ENCODE measurements at regions of chr1 and their contacts with region 1.

Region 1: DNA sequence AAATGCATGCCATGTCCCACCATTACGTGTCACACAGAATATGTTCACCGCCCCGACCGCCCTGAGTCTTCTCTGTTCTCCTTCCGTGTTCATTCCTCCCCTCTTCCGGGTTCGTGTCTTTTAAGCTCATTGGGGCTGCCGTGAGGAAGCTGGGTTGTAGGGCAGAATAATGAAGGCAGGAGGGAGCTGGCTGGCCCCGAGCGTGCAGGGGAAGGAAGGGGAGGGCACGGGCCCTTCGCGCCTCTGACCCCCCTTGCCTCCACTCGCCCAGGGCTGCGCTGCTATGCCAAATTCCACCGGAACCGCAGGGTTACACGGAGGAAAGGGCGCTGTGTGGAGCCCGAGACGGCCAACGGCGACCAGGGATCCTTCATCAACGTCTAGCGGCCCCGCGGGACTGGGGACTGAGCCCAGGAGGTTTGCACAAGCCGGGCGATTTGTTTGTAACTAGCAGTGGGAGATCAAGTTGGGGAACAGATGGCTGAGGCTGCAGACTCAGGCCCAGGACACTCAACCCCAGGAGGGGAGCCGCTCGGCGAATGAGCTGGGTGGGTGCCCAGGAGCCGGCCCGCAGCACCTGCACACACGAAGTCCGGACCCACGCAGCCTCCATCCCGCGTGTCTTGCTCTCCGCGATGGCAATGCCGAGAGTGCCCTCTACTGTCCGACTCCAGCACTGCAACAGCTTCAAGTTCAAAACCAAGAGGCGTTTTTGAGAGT is 16.5 kb upstream of the AGTRAP start:
- DNase-seq: peak; percentile 89 to 95
- ATAC-seq: peak; percentile 84 to 92 (median 87)
- H3K4me3 ChIP-seq: peak overlapping the region; percentile 40
- H3K4me3 Mint-ChIP-seq: peak overlapping the region; percentile 83
- H3K27ac ChIP-seq: peak overlapping the region; percentile 75
- H3K27ac Mint-ChIP-seq: peak overlapping the region; percentile 91 to 93
- H3K4me1 ChIP-seq: peaks cover 20% of the 10 kb centered on the region
- H3K4me1 Mint-ChIP-seq: peaks cover 17 to 19% of the 10 kb centered on the region in 2 donors
- H3K27me3 ChIP-seq: no peaks in the 10 kb centered on the region
- H3K27me3 Mint-ChIP-seq: no peaks in the 10 kb centered on the region
- CTCF ChIP-seq: peak; percentile 98

Region 2: DNA sequence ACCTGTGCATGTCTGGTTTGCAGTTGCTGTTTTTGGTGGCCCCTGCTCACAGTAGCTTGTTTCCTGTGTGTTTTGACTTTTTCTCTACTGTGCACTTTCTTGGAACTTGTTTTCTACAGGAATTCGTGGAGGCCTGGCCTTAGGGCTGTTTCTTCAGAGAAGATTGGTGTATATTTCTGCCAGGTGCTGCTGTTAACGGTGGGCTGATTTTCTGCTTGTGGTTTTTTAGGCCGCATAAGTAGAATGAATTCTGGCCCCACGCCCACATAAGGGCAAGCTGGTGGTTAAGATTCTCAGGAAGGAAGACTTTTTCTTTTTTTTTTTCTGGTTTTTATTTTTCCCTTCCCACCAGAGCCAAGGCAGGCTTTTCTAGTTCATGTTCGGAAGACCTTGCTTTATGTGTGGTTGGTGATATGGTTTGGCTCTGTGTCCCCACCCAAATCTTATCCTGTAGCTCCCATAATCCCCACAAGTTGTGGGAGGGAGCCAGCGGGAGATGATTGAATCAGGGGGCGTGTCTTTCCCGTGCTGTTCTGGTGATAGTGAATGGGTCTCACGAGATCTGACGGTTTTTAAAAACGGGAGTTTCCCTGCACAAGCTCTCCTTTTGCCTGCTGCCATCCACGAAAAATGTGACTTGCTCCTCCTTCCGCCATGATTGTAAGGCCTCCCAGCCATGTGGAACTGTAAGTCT is 312.0 kb before region 1 on chr1:
- intact Hi-C with region 1: no loop called
- DNase-seq: peak in 1 of 2 donors; percentile 30
- ATAC-seq: no peak
- H3K4me3 ChIP-seq: no peak overlapping the region
- H3K4me3 Mint-ChIP-seq: peak overlapping the region; percentile 80
- H3K27ac ChIP-seq: no peak overlapping the region
- H3K27ac Mint-ChIP-seq: peak overlapping the region; percentile 7 to 8
- H3K4me1 ChIP-seq: peaks cover 20% of the 10 kb centered on the region
- H3K4me1 Mint-ChIP-seq: peaks cover 21 to 24% of the 10 kb centered on the region in 2 donors
- H3K27me3 ChIP-seq: no peaks in the 10 kb centered on the region
- H3K27me3 Mint-ChIP-seq: no peaks in the 10 kb centered on the region
- CTCF ChIP-seq: no peak

Region 3: GRCh38 chr1:11661103-11661502 is 58.4 kb before region 1 on chr1:
- intact Hi-C with region 1: loop called (anchors 1 kb)
- DNase-seq: no peak
- ATAC-seq: no peak
- H3K4me3 ChIP-seq: no peak overlapping the region
- H3K4me3 Mint-ChIP-seq: no peak overlapping the region
- H3K27ac ChIP-seq: no peak overlapping the region
- H3K27ac Mint-ChIP-seq: no peak overlapping the region
- H3K4me1 ChIP-seq: peaks cover 22% of the 10 kb centered on the region
- H3K4me1 Mint-ChIP-seq: peaks cover 0 to 5% of the 10 kb centered on the region in 2 donors
- H3K27me3 ChIP-seq: no peaks in the 10 kb centered on the region
- H3K27me3 Mint-ChIP-seq: no peaks in the 10 kb centered on the region
- CTCF ChIP-seq: no peak

Region 4: DNA sequence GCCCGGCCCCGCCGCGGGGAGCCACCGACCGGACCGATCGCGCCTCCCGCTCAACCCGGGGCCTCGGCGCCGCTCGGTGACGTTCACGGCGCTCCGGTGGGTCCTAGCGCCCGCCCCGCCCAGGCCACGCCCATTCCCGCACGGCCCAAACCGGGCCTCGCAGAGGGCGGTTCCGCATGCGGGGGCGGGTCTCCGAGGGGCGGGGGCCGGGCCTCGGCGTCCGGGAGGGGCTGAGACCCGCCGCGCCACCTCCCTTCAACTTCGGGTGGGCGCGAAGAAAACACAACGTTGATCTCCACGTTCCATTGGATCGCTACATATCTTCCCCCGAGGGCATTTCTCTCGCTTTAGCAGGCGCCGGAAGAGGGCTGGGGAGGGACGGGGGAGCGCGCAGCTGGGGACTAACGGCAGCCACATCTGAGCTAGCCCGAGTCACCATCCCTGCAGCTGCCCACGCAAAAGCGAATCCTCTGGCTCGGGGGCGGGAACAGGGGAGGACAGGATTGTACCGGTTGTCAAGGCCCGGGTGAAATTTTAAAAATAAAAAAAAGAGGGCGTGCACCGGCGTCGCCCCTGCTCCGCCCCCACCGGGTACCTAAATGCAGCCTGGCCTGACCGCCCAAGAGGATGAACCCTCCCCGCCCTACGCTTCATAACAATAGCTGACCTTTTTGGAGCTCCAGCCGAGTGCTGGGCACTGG is 38.3 kb before region 1 on chr1 and contains the start of gene MAD2L2:
- intact Hi-C with region 1: loop called (anchors 5 kb)
- DNase-seq: peak; percentile 90 to 93
- ATAC-seq: peak; percentile 92 to 96 (median 93)
- H3K4me3 ChIP-seq: peak within 1 kb of the TSS; percentile 98
- H3K4me3 Mint-ChIP-seq: peak within 1 kb of the TSS; percentile 92
- H3K27ac ChIP-seq: peak within 1 kb of the TSS; percentile 61
- H3K27ac Mint-ChIP-seq: peak within 1 kb of the TSS; percentile 62 to 91
- H3K4me1 ChIP-seq: peaks cover 23% of the 10 kb centered on the region
- H3K4me1 Mint-ChIP-seq: peaks cover 5 to 24% of the 10 kb centered on the region in 2 donors
- H3K27me3 ChIP-seq: no peaks in the 10 kb centered on the region
- H3K27me3 Mint-ChIP-seq: no peaks in the 10 kb centered on the region
- CTCF ChIP-seq: no peak
- total RNA-seq, gene MAD2L2: 50.6 to 66.0 (median 60.4) TPM